H1 (cell line): ENCODE measurements at regions of chr12 and their contacts with region 1.

Region 1: DNA sequence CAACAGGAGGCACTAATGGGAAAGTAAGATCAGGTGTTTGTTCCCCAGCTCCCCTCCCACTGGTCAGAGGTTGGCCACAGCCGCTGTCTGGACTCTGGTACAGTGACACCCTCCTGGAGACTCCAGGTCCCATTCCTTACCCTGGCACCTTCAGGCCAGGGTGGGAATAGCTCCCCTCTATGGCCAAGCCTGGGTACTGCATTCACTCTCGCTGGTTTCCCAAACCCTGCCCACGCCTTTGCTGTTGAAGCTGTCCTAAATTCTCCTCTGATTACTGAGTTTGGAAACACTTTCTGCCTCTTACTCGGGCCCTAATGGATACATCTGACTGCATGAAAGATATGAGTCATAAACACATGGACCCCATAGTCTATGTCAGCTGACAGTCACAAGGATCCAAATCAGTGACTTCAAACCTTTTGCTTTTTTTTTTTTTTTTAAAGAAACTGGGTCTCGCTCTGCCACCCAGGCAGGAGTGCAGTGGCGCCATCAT is 17.9 kb downstream of the HRK start:
- DNase-seq: peak; percentile 47 to 91
- H3K4me3 ChIP-seq: no peak overlapping the region
- H3K27ac ChIP-seq: no peak overlapping the region
- H3K4me1 ChIP-seq: no peaks in the 10 kb centered on the region; a peak in 1 of 7 replicates
- H3K27me3 ChIP-seq: no peaks in the 10 kb centered on the region
- CTCF ChIP-seq: peak; percentile 82 to 96 (median 90)
- EP300 ChIP-seq: no peak
- POLR2A ChIP-seq: no peak
- RAD21 ChIP-seq: peak; percentile 69 to 76

Region 2: DNA sequence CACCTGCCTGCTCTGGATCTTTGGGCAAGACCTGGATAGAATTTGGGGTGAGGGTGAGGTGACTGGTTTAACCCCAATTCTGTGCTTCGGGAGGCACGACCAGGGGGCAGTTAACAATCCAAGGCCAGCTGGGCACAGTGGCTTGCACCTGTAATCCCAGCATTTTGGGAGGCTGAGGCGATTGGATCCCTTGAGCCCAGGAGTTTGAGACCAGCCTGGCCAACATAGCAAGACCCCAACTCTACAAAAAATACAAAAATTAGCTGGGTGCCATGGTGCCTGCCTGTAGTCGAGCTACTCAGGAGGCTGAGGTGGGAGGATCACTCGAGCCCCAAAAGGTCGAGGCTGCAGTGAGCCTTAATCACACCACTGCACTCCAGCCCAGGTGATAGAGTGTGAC is 20.2 kb before region 1 on chr12:
- CTCF ChIA-PET with region 1: interaction called, 33 read pairs
- POLR2A ChIA-PET with region 1: interaction called, 3 read pairs
- DNase-seq: no peak
- H3K4me3 ChIP-seq: no peak overlapping the region
- H3K27ac ChIP-seq: no peak overlapping the region
- H3K4me1 ChIP-seq: no peaks in the 10 kb centered on the region
- H3K27me3 ChIP-seq: no peaks in the 10 kb centered on the region
- CTCF ChIP-seq: no peak
- EP300 ChIP-seq: no peak
- POLR2A ChIP-seq: no peak
- RAD21 ChIP-seq: no peak

Region 3: DNA sequence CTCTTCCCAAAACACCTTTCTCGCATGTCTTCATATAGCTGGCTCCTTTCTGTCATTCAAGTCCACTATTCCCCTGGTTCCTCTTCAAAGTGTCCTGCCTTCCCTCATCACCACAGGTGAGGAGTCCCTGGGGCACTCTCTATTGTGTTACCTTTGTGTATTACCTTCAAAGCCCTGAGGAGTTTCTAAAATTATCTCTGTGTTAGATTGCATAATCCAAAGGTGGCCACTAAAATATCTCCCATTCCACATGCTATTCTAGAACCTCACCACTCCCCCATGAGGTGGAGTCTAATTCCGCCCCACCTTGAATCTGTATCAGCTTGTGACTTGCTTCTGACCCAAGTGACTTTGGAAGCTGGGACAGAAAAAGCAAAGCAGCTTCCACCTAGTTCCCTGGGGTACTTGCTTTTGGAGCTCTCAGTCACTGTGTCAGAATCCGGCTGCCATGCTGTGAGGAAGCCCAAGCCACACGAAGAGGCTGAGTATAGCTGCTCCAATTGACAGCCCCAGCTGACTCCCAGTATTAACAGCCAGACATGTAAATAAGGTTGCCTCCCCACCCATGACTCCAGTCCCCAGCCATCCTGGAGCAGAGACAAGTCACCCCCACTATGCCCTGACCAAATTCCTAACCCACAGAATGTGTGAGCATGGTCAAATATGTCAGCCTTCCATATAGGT is 11.1 kb after region 1 on chr12:
- CTCF ChIA-PET with region 1: interaction called, 39 read pairs
- POLR2A ChIA-PET with region 1: interaction called, 3 read pairs
- DNase-seq: no peak
- H3K4me3 ChIP-seq: no peak overlapping the region
- H3K27ac ChIP-seq: no peak overlapping the region
- H3K4me1 ChIP-seq: peaks cover 2 to 14% (median 7%) of the 10 kb centered on the region in 4 experiments
- H3K27me3 ChIP-seq: peaks cover 18 to 24% (median 24%) of the 10 kb centered on the region in 4 experiments
- CTCF ChIP-seq: no peak
- EP300 ChIP-seq: no peak
- POLR2A ChIP-seq: no peak
- RAD21 ChIP-seq: no peak